Activated CD4-positive, alpha-beta memory T cell treated with anti-CD3 and anti-CD28 coated beads for 36 hours (primary cell): ENCODE measurements at regions of chr6 and their contacts with region 1.

Region 1: GRCh38 chr6:32853541-32854375 is at the starts of genes PSMB9 and TAP1:
- DNase-seq: peak; percentile 97
- H3K4me3 Mint-ChIP-seq: peak within 1 kb of the TSS; percentile 99
- H3K27ac Mint-ChIP-seq: peak within 1 kb of the TSS; percentile 98
- H3K4me1 Mint-ChIP-seq: peaks cover 54% of the 10 kb centered on the region
- H3K27me3 Mint-ChIP-seq: no peaks in the 10 kb centered on the region
- total RNA-seq, gene PSMB9: 296 to 302 TPM
- total RNA-seq, gene TAP1: 245 to 258 TPM

Region 2: GRCh38 chr6:32190054-32190851 is 663.5 kb before region 1 on chr6 and contains the start of gene PBX2:
- CTCF ChIA-PET with region 1: no interaction called
- POLR2A ChIA-PET with region 1: no interaction called
- intact Hi-C with region 1: loop called (anchors 5 kb)
- DNase-seq: peak; percentile 91
- H3K4me3 Mint-ChIP-seq: peak within 1 kb of the TSS; percentile 92
- H3K27ac Mint-ChIP-seq: peak within 1 kb of the TSS; percentile 98
- H3K4me1 Mint-ChIP-seq: peaks cover 56% of the 10 kb centered on the region
- H3K27me3 Mint-ChIP-seq: no peaks in the 10 kb centered on the region
- total RNA-seq, gene PBX2: 63.4 to 65.9 TPM